CD8-positive, alpha-beta memory T cell (primary cell): ENCODE measurements at regions of chr13 and their contacts with region 1.

Region 1: GRCh38 chr13:27251166-27252091 is at the start of gene RPL21:
- DNase-seq: peak; percentile 85 to 94 (median 92)
- H3K4me3 ChIP-seq: peak within 1 kb of the TSS; percentile 65
- H3K4me3 Mint-ChIP-seq: peak within 1 kb of the TSS; percentile 92 to 99 (median 96)
- H3K27ac ChIP-seq: peak within 1 kb of the TSS; percentile 97
- H3K27ac Mint-ChIP-seq: peak within 1 kb of the TSS; percentile 98 to 100 (median 100)
- H3K4me1 ChIP-seq: peaks cover 42% of the 10 kb centered on the region
- H3K4me1 Mint-ChIP-seq: peaks cover 43 to 63% (median 61%) of the 10 kb centered on the region in 3 donors
- H3K27me3 ChIP-seq: no peaks in the 10 kb centered on the region
- H3K27me3 Mint-ChIP-seq: no peaks in the 10 kb centered on the region
- total RNA-seq, gene RPL21: 1,206 to 1,216 TPM

Region 2: DNA sequence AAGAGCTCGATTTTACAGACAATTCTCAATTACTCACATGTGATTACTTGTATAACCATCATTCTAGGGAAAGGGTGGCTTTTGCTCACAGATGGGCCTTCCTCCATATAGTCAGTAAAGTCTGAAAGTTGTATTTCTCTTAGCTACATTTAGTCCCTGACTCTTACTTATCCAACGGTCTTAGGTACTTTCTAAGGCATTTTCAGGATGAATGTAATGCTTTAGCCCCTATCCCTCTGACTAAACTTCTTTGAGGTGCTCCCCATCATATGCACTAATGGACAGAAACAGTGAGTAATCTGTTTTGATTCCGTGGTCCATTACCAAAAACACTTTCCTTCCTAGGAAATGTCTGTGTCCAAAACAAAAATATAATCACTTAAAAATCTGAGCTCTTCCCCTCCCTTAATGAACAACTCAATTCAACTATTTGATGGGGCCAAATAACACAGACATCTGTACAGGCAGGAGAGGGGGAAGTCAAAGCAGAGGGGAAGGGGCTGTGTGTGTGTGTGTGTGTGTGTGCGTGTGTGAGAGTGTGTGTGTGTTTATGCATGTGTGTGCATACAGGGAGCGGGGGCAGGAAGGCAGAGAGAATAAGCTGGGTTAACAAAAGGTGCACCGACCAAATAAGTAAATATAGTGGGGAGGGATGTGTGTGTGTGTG is 164.7 kb before region 1 on chr13:
- CTCF ChIA-PET with region 1: no interaction called
- POLR2A ChIA-PET with region 1: no interaction called
- DNase-seq: no peak
- H3K4me3 ChIP-seq: no peak overlapping the region
- H3K4me3 Mint-ChIP-seq: no peak overlapping the region
- H3K27ac ChIP-seq: no peak overlapping the region
- H3K27ac Mint-ChIP-seq: no peak overlapping the region
- H3K4me1 ChIP-seq: no peaks in the 10 kb centered on the region
- H3K4me1 Mint-ChIP-seq: peaks cover 6 to 16% (median 7%) of the 10 kb centered on the region in 3 donors
- H3K27me3 ChIP-seq: no peaks in the 10 kb centered on the region
- H3K27me3 Mint-ChIP-seq: no peaks in the 10 kb centered on the region

Region 3: DNA sequence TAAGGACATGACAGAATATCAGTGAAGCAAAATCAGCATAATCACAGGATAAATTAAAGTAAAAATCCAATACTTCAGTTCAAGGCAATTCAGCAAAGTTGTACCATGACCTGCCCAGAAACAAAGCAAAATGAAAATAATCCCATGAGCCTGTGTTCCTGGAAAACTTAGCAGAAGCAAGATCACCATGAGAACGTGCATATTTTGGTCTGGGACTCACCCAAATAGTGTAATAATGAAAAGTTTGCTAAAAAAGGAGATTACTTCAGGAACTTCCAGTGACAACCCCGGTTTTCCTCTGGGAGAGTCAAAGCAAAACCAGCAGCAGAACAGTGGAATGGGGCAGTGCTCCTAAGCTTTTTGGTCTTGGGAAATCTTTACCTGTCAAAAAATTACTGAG is 15.0 kb before region 1 on chr13:
- CTCF ChIA-PET with region 1: no interaction called
- POLR2A ChIA-PET with region 1: no interaction called
- DNase-seq: no peak
- H3K4me3 ChIP-seq: no peak overlapping the region
- H3K4me3 Mint-ChIP-seq: no peak overlapping the region
- H3K27ac ChIP-seq: no peak overlapping the region
- H3K27ac Mint-ChIP-seq: no peak overlapping the region
- H3K4me1 ChIP-seq: no peaks in the 10 kb centered on the region
- H3K4me1 Mint-ChIP-seq: no peaks in the 10 kb centered on the region
- H3K27me3 ChIP-seq: no peaks in the 10 kb centered on the region
- H3K27me3 Mint-ChIP-seq: no peaks in the 10 kb centered on the region

Region 4: DNA sequence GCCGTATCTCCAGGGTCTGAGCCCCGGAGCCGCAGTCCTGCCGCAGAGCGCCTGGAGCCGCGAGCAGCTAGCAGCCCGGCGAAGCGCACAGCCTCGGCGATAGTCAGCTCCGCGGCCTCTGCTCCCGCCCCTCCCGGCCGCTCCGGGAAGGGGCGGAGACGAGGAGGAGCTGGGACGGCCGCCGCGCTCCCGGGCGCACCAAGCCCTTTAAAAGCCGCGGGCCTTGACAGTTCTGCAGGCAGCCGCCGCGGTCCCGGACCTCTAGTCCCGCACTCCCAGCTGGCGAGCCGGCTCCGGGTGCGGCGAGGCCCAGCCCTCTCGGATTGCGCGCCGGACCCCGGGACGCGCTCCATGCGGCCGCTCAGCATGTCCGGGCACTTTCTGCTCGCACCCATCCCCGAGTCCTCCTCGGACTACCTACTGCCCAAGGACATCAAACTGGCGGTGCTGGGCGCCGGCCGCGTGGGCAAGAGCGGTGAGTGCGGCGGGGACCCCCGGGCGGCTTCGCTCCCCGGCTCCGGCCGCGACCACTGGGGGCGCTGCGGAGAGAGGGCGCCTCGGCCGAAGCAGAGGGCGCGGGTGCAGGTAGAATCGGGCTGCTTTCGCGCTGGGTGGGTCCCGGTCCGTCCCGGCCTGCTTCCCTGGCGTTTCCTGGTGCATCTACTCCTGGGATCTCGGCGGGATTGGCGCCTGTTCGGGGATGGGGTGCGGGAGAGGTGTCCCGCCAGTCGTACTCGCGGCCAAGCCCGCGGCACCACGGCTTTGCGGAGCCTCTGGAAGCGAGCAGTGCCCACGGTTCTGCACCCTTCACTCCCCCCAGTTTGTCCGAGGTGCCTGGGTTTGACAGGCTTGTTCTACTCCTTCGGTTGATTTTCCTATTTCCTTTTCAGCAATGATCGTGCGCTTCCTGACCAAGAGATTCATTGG is 19.4 kb after region 1 on chr13 and contains the start of gene RASL11A:
- CTCF ChIA-PET with region 1: interaction called, 15 read pairs
- POLR2A ChIA-PET with region 1: interaction called, 5 read pairs
- DNase-seq: peak; percentile 64 to 79 (median 67)
- H3K4me3 ChIP-seq: peak within 1 kb of the TSS; percentile 74
- H3K4me3 Mint-ChIP-seq: peak within 1 kb of the TSS; percentile 87 to 95 (median 90)
- H3K27ac ChIP-seq: peak within 1 kb of the TSS; percentile 8
- H3K27ac Mint-ChIP-seq: peak within 1 kb of the TSS in 6 of 8 donors; percentile 38 to 85 (median 80)
- H3K4me1 ChIP-seq: peaks cover 6% of the 10 kb centered on the region
- H3K4me1 Mint-ChIP-seq: peaks cover 8 to 14% (median 13%) of the 10 kb centered on the region in 3 donors
- H3K27me3 ChIP-seq: peaks cover 4% of the 10 kb centered on the region
- H3K27me3 Mint-ChIP-seq: peaks cover 4 to 30% of the 10 kb centered on the region in 2 donors
- total RNA-seq, gene RASL11A: 5.3 to 6.3 TPM

Region 5: DNA sequence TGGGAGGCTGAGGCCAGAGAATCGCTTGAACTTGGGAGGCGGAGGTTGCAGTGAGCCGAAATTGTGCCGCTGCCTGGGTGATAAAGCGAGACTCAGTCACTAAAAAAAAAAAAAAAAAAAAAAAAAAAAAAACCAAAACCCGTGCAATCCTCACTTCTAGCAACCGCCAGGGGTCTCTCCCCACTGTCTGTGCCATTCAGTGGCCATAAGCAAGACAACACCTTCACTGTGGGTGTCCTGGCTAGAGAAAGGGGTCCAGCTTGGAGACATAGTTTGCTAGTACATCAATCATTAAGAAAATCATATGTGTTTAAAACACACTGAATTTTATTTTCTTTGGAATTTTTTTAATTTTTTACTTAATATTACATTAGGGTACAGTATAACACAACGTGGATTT is 87.4 kb after region 1 on chr13:
- CTCF ChIA-PET with region 1: no interaction called
- POLR2A ChIA-PET with region 1: interaction called, 10 read pairs
- DNase-seq: no peak
- H3K4me3 ChIP-seq: no peak overlapping the region
- H3K4me3 Mint-ChIP-seq: no peak overlapping the region
- H3K27ac ChIP-seq: no peak overlapping the region
- H3K27ac Mint-ChIP-seq: no peak overlapping the region
- H3K4me1 ChIP-seq: no peaks in the 10 kb centered on the region
- H3K4me1 Mint-ChIP-seq: no peaks in the 10 kb centered on the region
- H3K27me3 ChIP-seq: no peaks in the 10 kb centered on the region
- H3K27me3 Mint-ChIP-seq: peaks cover 15 to 29% of the 10 kb centered on the region in 2 donors